ENCODE measurements at regions of chr1 and their contacts with region 1.

Region 1: DNA sequence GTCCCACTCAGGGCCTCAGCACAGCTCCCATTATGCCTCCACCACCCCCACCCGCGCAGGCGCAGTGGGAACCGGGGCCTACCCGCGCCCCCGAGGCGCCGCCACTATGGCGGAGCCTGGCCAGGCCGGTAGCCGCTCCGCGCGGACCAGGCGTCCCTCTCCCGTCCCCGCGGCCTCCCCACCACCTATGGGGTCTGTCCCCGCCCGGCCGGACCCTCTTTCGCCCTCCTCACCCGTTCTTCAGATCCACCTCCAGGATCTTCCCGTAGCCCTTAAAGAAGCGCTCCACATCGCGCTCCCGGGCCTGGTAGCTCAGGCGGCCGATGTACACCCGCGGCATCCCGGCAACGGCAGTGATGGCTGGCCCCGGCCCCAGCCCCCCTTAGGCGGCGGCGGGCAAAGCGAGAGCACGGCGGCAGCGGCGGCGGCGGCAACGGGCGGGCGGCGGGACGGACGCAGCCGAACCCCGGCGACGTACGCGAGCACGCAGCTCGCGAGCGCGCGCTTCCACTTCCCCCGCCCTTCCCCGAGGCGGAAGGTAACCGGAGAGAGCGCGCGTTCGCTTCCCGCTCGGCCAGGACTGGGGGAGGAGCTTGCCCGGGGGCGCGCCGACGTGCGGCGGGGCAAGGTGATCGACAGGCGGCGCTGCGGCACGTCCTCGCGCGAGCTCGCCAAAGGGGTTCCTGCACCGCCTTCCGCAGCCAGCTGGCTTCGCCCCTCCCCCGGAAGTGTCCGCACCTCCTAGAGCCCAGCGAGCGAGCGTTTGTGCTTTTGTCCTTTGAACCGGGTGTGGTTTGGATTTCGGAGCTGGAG is at the start of gene SRSF4:
- H3K4me3 ChIP-seq: peak within 1 kb of the TSS; percentile 100
- H3K27ac ChIP-seq: peak within 1 kb of the TSS; percentile 99
- H3K4me1 ChIP-seq: peaks cover 6% of the 10 kb centered on the region; the same call in 1 of the 2 replicates
- CTCF ChIP-seq: peak; percentile 100

Region 2: DNA sequence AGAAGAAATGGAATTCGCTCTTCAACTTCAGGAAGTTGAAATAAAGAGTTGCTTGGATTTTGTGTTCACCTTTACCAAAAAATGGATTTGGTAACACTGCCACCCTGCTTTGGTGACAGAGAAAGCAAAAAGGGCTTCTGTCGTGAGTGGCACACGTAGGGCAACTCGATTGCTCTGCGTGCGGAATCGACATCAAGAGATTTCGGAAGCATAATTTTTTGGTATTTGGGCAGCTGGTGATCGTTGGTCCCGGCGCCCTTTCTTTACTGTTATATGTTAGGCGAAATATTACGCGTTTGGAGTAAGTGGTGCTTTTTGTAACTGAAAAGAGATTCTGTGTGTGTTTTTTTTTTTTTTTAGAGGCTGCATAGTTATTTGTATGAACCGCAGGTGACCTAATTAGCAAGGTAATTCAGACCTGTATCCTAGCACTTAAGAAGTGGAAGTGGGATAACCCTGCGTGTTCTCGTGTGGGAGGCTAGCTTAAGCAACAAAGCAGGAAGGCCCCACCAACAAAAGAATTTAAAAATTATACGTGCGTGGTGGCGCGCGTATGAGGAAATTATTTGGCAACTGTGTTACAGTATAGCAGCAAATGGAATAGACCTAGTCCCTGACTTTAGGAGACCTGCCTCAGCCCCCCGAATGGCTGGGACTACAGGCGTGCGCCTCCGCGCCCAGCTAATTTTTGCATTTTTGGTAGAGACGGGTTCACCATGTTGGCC is 533.0 kb before region 1 on chr1 and contains the start of gene RNU11:
- CTCF ChIA-PET with region 1: no interaction called
- POLR2A ChIA-PET with region 1: interaction called, 11 read pairs
- H3K4me3 ChIP-seq: peak within 1 kb of the TSS; percentile 40
- H3K27ac ChIP-seq: peak within 1 kb of the TSS; percentile 95
- H3K4me1 ChIP-seq: no peaks in the 10 kb centered on the region
- CTCF ChIP-seq: peak; percentile 28; the same call in 1 of the 2 replicates

Region 3: DNA sequence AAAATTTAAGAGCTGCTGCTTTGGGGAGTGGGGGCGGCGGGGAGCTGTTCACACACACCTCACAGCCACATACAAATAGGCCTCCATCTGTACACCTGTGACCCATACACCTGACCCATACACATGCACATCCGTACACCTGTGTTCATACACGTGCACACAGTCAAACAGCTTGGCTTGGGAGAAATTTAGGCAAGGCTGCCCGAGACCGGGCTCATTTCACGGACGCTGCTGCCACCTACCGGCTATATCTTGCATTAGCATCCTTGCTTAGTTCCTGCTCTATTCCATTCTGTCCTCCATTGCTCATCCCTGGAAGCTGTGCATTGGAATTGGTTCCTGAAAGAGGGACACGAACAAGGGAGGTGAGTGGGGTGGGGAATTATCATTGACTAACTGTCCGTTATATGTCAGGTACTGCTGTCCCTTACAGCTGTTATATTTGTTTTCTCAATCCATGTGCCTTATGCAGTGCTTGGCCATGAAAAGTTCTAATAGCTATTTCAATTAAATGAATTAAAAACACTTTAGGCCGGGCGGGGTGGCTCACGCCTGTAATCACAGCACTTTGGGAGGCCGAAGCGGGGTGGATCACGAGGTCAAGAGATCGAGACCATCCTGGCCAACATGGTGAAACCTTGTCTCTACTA is 304.4 kb before region 1 on chr1:
- CTCF ChIA-PET with region 1: interaction called, 10 read pairs
- POLR2A ChIA-PET with region 1: interaction called, 4 read pairs
- H3K4me3 ChIP-seq: no peak overlapping the region
- H3K27ac ChIP-seq: no peak overlapping the region
- H3K4me1 ChIP-seq: no peaks in the 10 kb centered on the region
- CTCF ChIP-seq: peak; percentile 89

Region 4: GRCh38 chr1:29120961-29121485 is 60.6 kb before region 1 on chr1:
- CTCF ChIA-PET with region 1: interaction called, 6 read pairs
- POLR2A ChIA-PET with region 1: interaction called, 12 read pairs
- H3K4me3 ChIP-seq: no peak overlapping the region
- H3K27ac ChIP-seq: no peak overlapping the region
- H3K4me1 ChIP-seq: no peaks in the 10 kb centered on the region
- CTCF ChIP-seq: no peak

Region 5: GRCh38 chr1:29197585-29197924 is 15.9 kb after region 1 on chr1:
- CTCF ChIA-PET with region 1: interaction called, 44 read pairs
- POLR2A ChIA-PET with region 1: interaction called, 17 read pairs
- H3K4me3 ChIP-seq: no peak overlapping the region
- H3K27ac ChIP-seq: no peak overlapping the region
- H3K4me1 ChIP-seq: no peaks in the 10 kb centered on the region
- CTCF ChIP-seq: peak; percentile 52; the same call in 1 of the 2 replicates

Region 6: GRCh38 chr1:29245876-29246275 is 64.3 kb after region 1 on chr1:
- CTCF ChIA-PET with region 1: no interaction called
- POLR2A ChIA-PET with region 1: no interaction called
- H3K4me3 ChIP-seq: no peak overlapping the region
- H3K27ac ChIP-seq: no peak overlapping the region
- H3K4me1 ChIP-seq: no peaks in the 10 kb centered on the region
- CTCF ChIP-seq: peak; percentile 80